PC-3 (cell line): ENCODE measurements at regions of chr6 and their contacts with region 1.

Region 1: GRCh38 chr6:63609231-63609630 is 26.4 kb upstream of the PHF3 start:
- DNase-seq: no peak
- ATAC-seq: no peak
- H3K4me3 ChIP-seq: no peak overlapping the region
- H3K27ac ChIP-seq: no peak overlapping the region
- H3K4me1 ChIP-seq: no peaks in the 10 kb centered on the region
- H3K27me3 ChIP-seq: no peaks in the 10 kb centered on the region
- CTCF ChIP-seq: no peak

Region 2: DNA sequence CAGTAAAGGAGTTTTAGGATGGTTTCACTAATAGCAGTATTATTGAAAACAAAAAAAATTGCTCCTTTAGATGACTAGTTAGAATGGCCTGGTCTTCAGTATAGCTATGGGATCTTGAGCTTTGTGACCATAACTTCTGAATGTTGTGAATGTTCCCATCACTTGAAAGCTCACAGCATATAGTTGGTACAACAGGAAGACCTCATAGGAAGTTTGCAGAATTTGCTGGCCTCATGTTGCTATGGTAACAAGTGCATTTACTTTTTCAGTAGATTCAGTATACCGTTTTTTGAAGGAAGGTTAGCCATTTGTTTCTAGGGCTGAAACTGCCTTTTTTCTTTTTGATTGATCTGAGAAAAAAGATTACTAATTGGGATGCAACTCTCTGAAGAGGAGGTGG is 34.6 kb after region 1 on chr6:
- CTCF ChIA-PET with region 1: no interaction called
- POLR2A ChIA-PET with region 1: no interaction called
- intact Hi-C with region 1: no loop called
- DNase-seq: no peak
- ATAC-seq: no peak
- H3K4me3 ChIP-seq: no peak overlapping the region
- H3K27ac ChIP-seq: no peak overlapping the region
- H3K4me1 ChIP-seq: peaks cover 18% of the 10 kb centered on the region
- H3K27me3 ChIP-seq: no peaks in the 10 kb centered on the region
- CTCF ChIP-seq: no peak

Region 3: DNA sequence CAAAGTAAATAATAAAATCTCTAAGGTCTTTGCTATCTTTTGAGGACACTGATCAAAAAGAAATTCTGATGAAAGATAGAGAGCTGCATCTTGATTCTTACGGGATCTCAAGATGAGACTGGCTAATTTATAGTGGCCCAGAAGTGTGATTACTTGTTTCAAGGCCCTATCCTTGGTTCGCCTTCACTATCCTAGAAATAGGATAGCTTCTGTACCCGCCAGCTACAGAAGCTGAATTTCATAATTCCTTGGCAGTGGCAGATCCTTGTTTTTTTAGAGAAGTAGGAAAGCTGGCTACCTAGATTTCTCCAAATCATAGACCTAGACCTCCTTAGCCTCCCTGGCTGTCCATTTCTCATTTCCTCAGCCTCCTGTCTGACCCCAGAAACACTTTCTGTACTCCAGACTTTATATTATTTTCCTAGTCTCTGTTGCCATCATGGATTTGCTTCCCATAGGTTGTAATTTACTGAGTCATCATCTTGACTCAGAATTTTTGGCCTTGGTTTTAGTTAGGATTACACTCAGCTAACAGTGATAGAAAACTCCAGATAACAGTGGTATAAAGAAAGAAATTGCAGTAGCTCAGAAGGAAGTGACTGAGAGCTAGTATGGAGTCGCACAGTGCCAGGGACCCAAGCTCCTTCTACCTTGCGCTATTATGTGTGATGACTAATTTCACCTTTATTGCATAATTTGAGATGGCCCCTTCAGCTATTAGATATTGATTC is 54.1 kb after region 1 on chr6:
- CTCF ChIA-PET with region 1: no interaction called
- POLR2A ChIA-PET with region 1: no interaction called
- intact Hi-C with region 1: no loop called
- DNase-seq: peak; percentile 81
- ATAC-seq: peak; percentile 96
- H3K4me3 ChIP-seq: no peak overlapping the region
- H3K27ac ChIP-seq: peak overlapping the region; percentile 66
- H3K4me1 ChIP-seq: peaks cover 14% of the 10 kb centered on the region
- H3K27me3 ChIP-seq: no peaks in the 10 kb centered on the region
- CTCF ChIP-seq: no peak

Region 4: GRCh38 chr6:63783096-63783495 is 173.9 kb after region 1 on chr6:
- CTCF ChIA-PET with region 1: no interaction called
- POLR2A ChIA-PET with region 1: interaction called, 10 read pairs
- intact Hi-C with region 1: no loop called
- DNase-seq: no peak
- ATAC-seq: no peak
- H3K4me3 ChIP-seq: no peak overlapping the region
- H3K27ac ChIP-seq: no peak overlapping the region
- H3K4me1 ChIP-seq: no peaks in the 10 kb centered on the region
- H3K27me3 ChIP-seq: no peaks in the 10 kb centered on the region
- CTCF ChIP-seq: no peak